Ovary (tissue), 10 donors: ENCODE measurements at regions of chr2 and their contacts with region 1.

Region 1: GRCh38 chr2:202033321-202034248 is at the start of gene FZD7:
- DNase-seq: peak; percentile 95 to 97 (median 96)
- H3K4me3 ChIP-seq: peak within 1 kb of the TSS; percentile 77
- H3K27ac ChIP-seq: peak within 1 kb of the TSS; percentile 93 to 95
- H3K4me1 ChIP-seq: peaks cover 14% of the 10 kb centered on the region
- H3K27me3 ChIP-seq: no peaks in the 10 kb centered on the region
- CTCF ChIP-seq: no peak
- EP300 ChIP-seq: no peak
- POLR2A ChIP-seq: peak; percentile 72
- total RNA-seq, gene FZD7: 18.4 to 56.3 (median 35.9) TPM

Region 2: GRCh38 chr2:201040867-201041628 is 992.5 kb before region 1 on chr2:
- intact Hi-C with region 1: no loop called
- DNase-seq: no peak
- H3K4me3 ChIP-seq: no peak overlapping the region
- H3K27ac ChIP-seq: no peak overlapping the region
- H3K4me1 ChIP-seq: no peaks in the 10 kb centered on the region
- H3K27me3 ChIP-seq: no peaks in the 10 kb centered on the region
- CTCF ChIP-seq: no peak
- EP300 ChIP-seq: no peak
- POLR2A ChIP-seq: no peak

Region 3: DNA sequence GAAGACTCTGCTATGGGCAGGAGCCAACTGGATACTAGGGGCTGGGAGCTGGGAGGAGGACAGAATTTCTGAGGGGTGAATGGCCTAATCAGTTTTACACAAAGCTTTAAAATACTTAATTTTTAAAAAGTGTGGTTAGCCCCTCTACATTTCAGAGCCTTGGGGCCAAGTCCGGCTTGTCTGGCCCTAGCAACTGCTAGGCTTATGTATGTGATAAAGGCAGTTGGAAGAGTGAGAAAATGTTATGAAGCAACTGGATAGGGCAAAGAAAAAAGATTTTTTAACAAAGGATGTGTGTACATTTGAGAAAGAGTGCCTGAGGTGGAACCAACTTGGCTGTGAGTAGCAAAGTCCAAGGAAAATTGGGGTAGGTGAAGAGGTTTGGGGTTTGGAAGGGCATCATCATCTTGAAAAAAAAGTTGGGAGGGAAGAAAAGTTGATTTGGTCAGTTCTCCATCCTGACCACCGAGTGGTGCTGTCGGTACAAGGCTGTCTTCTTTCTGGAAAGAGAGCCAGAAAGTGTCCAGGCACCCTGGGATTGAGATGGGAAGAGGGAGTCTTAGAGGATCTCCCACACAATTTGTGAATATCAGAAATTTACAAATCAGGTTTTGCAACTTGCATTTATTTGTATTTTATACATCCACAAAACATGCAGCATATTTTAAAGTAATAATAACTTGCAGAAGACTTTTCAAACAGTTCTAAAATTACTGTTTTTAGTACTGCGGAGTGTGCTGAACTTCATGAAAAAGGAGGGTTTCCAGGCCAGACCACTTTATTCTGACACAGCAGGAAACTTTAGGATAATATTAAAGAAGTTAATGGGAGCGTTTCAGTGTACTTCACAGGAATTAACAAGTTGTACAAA is 237.7 kb before region 1 on chr2:
- intact Hi-C with region 1: loop called in 2 of 4 experiments (anchors 5 kb)
- DNase-seq: peak in 4 of 5 donors; percentile 45 to 47 (median 46)
- H3K4me3 ChIP-seq: no peak overlapping the region
- H3K27ac ChIP-seq: no peak overlapping the region
- H3K4me1 ChIP-seq: no peaks in the 10 kb centered on the region
- H3K27me3 ChIP-seq: no peaks in the 10 kb centered on the region
- CTCF ChIP-seq: peak; percentile 17 to 65 (median 65)
- EP300 ChIP-seq: no peak
- POLR2A ChIP-seq: no peak

Region 4: DNA sequence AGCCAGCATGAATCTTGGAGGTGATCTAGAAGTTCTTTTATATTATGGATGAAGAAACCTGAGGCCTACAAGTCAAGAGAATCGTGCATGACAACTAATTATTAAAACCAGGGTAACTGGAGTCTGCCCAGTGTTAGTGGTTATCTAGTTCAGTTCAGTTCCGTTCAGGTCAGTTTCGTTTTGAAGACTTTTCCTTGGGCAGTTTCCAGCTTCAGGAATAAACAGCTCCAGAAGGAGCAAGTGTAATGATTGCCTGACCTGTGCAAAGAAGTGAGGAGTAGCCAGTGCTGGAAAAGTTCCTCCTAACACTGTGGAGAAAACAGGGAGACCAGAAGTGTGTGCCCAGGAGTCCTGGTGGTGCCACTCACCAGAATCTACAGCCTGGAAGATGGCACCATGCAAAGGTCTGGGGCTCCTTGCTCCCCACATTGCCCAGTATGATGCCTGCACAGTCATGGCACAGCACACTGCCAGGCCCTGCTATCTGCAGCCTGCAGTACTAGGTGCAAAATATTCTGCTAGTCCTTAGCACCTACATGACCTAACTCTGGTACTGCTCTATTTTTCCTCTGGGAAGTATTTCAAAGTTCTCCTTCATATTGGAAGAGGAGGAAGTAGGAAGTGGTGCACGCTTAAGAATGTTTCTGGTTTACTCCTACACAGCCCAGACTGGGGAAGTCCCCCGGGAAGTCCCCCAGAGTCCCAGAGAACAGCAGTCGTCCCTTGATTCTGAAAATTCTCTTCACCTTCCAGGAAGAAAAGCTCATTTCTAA is 139.0 kb after region 1 on chr2:
- intact Hi-C with region 1: loop called (anchors 2 to 5 kb)
- DNase-seq: peak in 1 of 5 donors; percentile 14
- H3K4me3 ChIP-seq: no peak overlapping the region
- H3K27ac ChIP-seq: peak overlapping the region in 1 of 2 donors; percentile 8
- H3K4me1 ChIP-seq: peaks cover 3% of the 10 kb centered on the region
- H3K27me3 ChIP-seq: no peaks in the 10 kb centered on the region
- CTCF ChIP-seq: no peak
- EP300 ChIP-seq: no peak
- POLR2A ChIP-seq: no peak

Region 5: DNA sequence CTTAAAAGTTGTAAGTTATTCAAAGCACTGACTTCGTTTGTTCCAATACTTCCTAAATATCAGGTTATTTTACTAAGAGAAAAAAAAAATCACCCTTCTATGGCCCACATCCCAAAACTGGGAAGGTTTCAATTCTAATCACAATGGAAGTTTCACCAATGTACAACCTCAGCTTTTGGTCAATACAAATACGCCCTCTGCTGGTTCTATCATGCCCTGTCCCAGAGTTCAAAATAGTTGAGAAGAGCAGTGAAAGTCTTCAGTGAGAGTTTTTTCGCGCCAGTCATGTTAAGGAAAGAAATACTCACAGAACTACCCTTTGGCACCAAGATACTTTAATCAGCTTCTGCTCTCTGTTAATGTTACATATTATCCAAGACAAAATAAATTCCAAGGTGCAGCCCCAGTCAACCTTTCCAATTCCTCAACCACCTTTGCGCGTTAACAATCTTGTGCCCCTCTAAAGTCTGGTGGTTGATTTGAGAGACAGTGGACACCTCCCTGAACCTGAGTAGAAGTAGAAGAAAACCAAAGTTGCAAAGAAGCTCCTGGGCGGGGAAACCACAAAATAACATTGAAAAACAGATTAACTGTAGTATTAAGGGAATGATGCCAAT is 144.9 kb after region 1 on chr2:
- intact Hi-C with region 1: loop called (anchors 2 to 5 kb)
- DNase-seq: peak in 4 of 5 donors; percentile 44 to 77 (median 48)
- H3K4me3 ChIP-seq: no peak overlapping the region
- H3K27ac ChIP-seq: no peak overlapping the region
- H3K4me1 ChIP-seq: no peaks in the 10 kb centered on the region
- H3K27me3 ChIP-seq: no peaks in the 10 kb centered on the region
- CTCF ChIP-seq: peak; percentile 51 to 78 (median 71)
- EP300 ChIP-seq: no peak
- POLR2A ChIP-seq: no peak